ENCODE measurements at regions of chr12 and their contacts with region 1.

Region 1: GRCh38 chr12:125346362-125346761 is 281.1 kb downstream of the AACS start:
- DNase-seq: peak; percentile 11
- ATAC-seq: no peak
- H3K4me3 ChIP-seq: no peak overlapping the region
- H3K27ac ChIP-seq: no peak overlapping the region
- H3K4me1 ChIP-seq: no peaks in the 10 kb centered on the region
- H3K27me3 ChIP-seq: peaks cover 77% of the 10 kb centered on the region
- CTCF ChIP-seq: peak; percentile 28; the same call in 1 of the 2 replicates

Region 2: DNA sequence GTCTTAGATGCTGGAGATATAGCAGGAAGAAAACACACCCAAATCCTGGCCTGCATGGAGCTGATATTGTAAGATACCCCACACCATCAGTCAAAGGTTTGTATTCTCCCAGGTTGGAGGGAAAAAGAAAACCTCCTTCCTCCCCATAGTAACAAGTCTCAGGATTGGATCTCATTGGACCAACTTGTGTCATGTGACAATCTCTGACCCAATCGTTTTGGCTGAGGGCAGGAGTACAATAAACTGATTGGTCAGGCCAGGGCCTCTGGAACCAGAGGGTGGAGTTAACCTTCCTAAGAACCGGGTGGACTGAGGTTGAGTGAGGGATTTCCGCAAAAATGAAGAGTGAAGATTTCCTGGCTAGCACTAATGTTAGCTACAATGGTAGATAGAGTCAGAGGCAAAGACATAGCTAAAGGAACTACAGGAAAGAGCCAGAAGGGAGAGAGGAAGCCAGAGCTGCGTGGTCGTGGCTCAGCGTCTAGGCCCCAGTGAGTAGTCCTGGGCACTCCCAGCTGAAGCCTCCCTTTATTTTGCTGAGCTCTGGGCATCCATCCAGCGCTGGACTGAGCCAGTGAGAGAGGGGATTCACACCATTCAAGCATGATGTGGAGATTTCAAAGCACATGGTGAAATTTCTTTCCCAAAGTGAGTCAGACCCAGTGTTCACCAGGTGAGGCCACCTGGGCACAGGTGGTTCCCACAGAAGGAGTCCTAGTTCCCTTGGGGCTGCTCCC is 61.2 kb before region 1 on chr12:
- CTCF ChIA-PET with region 1: interaction called, 12 read pairs
- POLR2A ChIA-PET with region 1: no interaction called
- intact Hi-C with region 1: no loop called
- DNase-seq: no peak
- ATAC-seq: no peak
- H3K4me3 ChIP-seq: no peak overlapping the region
- H3K27ac ChIP-seq: no peak overlapping the region
- H3K4me1 ChIP-seq: no peaks in the 10 kb centered on the region
- H3K27me3 ChIP-seq: peaks cover 86% of the 10 kb centered on the region
- CTCF ChIP-seq: no peak

Region 3: GRCh38 chr12:125371033-125371432 is 24.7 kb after region 1 on chr12:
- CTCF ChIA-PET with region 1: no interaction called
- POLR2A ChIA-PET with region 1: no interaction called
- intact Hi-C with region 1: no loop called
- DNase-seq: no peak
- ATAC-seq: no peak
- H3K4me3 ChIP-seq: no peak overlapping the region
- H3K27ac ChIP-seq: no peak overlapping the region
- H3K4me1 ChIP-seq: no peaks in the 10 kb centered on the region
- H3K27me3 ChIP-seq: peaks cover 61% of the 10 kb centered on the region
- CTCF ChIP-seq: no peak

Measured in PC-3 (cell line).